ENCODE measurements at regions of chr3 and their contacts with region 1.

Region 1: DNA sequence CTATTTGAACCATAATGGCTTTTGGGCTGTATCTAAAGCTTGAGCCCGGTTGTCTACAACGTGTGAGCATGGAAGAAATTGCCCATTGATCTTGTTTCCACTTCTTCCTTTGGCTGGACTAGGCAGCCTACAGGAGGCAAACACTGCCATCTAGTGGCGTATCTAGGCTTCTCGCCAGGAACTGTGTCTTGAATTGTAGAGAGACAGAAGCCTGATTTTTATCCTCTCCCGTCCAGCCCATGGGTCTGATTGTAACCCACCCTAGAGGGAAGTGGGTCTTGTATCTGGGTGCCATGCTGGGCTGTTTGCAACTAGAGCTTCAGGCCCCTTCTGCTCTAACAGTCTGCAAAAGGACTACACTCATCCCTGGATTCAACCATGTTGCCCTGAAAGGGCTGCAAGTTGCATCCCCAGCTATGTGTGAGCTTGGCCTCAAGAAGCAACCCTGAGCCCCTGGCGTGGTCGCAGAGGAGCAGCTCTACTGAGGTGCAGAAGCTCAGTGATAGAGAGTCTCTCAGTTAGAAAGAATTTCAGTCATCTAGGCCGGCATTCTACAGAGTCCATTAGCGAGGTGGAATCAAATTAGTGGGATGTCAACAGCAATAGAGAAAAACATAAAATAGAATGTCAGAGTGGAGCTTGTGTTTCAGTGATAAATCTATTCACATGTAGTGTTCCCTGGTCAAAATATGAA is 170.2 kb upstream of the UMPS start:
- DNase-seq: peak; percentile 76
- ATAC-seq: peak; percentile 47
- H3K4me3 Mint-ChIP-seq: no peak overlapping the region
- H3K27ac Mint-ChIP-seq: no peak overlapping the region
- H3K4me1 Mint-ChIP-seq: no peaks in the 10 kb centered on the region
- H3K27me3 Mint-ChIP-seq: peaks cover 17% of the 10 kb centered on the region

Region 2: DNA sequence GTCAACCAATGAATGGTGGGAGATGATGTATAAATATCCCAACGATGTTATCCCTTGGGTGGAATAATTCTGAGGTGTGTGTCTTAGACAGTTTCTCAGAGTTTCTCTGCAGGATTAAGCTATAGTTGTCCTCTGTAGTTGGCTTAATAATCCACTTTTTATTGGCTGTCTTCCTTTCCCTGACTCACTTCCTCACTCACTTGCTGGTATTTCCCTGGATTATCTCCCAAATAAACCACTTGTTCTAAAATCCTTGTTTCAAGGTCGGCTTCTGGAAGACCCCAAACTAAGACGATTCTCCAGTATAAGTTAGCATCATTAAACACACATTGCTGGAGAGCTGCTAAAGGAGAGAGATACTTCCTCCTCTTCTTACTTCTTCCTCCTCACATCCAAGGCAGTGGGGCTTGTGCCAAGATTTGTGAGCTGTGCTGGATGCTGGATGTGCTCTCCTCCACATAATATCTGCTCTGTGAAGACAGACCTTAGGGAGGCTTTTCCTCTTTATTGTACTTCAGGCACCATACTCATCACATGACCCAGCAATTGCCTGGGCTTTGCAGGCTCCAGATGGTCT is 545.6 kb before region 1 on chr3:
- CTCF ChIA-PET with region 1: interaction called, 3 read pairs
- POLR2A ChIA-PET with region 1: no interaction called
- intact Hi-C with region 1: loop called in 1 of 2 experiments (anchors 10 kb)
- DNase-seq: no peak
- ATAC-seq: no peak
- H3K4me3 Mint-ChIP-seq: no peak overlapping the region
- H3K27ac Mint-ChIP-seq: no peak overlapping the region
- H3K4me1 Mint-ChIP-seq: no peaks in the 10 kb centered on the region
- H3K27me3 Mint-ChIP-seq: peaks cover 32% of the 10 kb centered on the region

Region 3: DNA sequence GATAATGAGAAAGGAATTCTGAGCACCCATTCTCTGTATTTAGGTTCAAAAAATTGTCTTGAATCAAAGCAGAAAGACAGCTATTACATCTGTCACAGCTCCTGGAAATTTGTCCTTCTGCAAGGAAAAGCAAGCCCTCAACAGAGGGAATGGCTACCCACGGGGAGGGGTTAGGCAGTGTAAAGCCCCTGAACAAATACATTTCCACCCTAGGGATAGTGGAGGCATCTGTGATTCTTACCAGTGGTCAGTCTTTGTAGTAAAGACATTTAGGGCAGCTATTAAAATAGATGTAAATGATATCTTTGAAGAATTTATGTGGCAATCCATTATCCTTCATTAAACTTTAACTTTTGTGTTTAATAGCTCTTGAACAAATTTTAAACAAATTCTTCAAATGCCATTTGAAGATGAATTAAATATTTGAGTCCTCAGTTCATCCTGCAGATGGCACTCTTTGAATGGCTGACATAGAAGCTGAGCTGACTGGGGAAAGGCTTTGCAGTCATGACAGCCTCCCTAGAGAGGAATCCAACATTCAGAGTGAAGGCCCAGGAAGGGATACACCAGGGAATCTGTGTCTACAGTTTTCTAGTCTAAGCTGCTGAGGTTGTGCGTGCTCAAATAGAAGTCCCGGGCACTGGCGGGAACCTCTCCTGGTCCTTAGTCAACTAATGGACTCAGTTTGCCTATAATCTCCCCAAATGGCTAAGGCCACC is 208.4 kb before region 1 on chr3:
- CTCF ChIA-PET with region 1: interaction called, 5 read pairs
- POLR2A ChIA-PET with region 1: no interaction called
- intact Hi-C with region 1: loop called in 1 of 2 experiments (anchors 10 kb)
- DNase-seq: no peak
- ATAC-seq: no peak
- H3K4me3 Mint-ChIP-seq: no peak overlapping the region
- H3K27ac Mint-ChIP-seq: no peak overlapping the region
- H3K4me1 Mint-ChIP-seq: no peaks in the 10 kb centered on the region
- H3K27me3 Mint-ChIP-seq: peaks cover 12% of the 10 kb centered on the region

Region 4: DNA sequence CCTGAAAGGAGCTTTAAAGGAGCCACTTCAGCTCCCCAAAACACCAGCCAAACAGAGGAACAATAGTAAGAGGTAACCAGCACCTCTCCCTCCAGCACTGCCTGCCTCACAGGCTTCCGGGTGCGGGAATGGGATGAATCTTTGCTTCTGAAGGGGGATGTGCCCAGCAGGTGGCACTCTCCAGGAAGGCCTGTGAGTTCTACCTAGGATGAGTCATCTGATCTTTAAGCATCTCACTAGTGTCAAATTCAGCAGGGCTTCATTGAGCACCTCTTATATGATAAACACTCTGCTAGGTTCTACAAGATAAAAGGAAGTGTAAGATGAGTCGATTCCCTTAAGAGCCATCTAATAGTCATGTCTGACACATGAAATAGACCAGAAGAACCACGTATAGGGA is 67.2 kb before region 1 on chr3:
- CTCF ChIA-PET with region 1: no interaction called
- POLR2A ChIA-PET with region 1: no interaction called
- intact Hi-C with region 1: loop called in 1 of 2 experiments (anchors 2 kb)
- DNase-seq: peak; percentile 44
- ATAC-seq: peak; percentile 55
- H3K4me3 Mint-ChIP-seq: no peak overlapping the region
- H3K27ac Mint-ChIP-seq: no peak overlapping the region
- H3K4me1 Mint-ChIP-seq: no peaks in the 10 kb centered on the region
- H3K27me3 Mint-ChIP-seq: peaks cover 6% of the 10 kb centered on the region

Measured in activated CD4-positive, alpha-beta T cell treated with anti-CD3 and anti-CD28 coated beads for 36 hours (primary cell).